BJ (cell line): ENCODE measurements at regions of chr1 and their contacts with region 1.

Region 1: GRCh38 chr1:115239148-115239820 is 98.8 kb downstream of the NGF start:
- DNase-seq: peak; percentile 71
- H3K4me3 ChIP-seq: no peak overlapping the region
- H3K27me3 ChIP-seq: no peaks in the 10 kb centered on the region
- CTCF ChIP-seq: no peak

Region 2: GRCh38 chr1:114575532-114575931 is 663.8 kb before region 1 on chr1:
- CTCF ChIA-PET with region 1: no interaction called
- POLR2A ChIA-PET with region 1: no interaction called
- DNase-seq: no peak
- H3K4me3 ChIP-seq: no peak overlapping the region
- H3K27me3 ChIP-seq: no peaks in the 10 kb centered on the region
- CTCF ChIP-seq: no peak

Region 3: DNA sequence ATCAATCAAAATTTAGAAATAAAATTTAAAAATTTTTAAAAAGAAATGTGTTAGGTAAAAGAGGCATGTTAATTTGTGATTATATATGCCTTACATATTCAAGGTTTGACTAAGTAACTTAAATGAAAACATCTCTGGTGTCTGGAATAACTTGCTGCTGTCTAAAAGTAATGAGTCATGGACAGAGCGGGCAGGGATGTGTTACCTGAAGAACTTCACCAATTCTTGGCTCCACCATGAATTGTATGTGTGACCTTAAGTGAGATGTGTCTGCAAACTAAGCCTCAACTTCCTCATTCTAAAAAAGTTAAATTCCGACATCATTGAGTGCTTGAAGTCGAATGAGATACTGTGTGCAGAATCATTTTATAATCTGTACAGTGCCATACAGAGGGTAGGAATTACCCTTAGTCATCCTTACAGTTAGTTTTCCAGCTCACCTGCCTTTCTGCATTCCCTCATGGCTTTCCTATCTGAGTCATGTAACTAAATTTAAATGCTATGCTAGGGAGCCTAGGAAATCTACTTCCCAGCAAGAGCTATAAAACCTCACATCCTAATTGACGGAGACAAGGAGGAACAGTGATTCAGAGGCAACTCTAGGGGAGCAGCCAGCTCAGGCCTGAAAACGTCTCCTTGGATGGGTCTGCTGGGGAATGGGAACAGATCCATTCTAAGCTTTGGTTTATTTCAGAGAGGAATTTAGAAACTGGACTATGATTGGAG is 49.3 kb before region 1 on chr1:
- CTCF ChIA-PET with region 1: interaction called, 3 read pairs
- POLR2A ChIA-PET with region 1: interaction called, 11 read pairs
- DNase-seq: peak; percentile 95
- H3K4me3 ChIP-seq: no peak overlapping the region
- H3K27me3 ChIP-seq: no peaks in the 10 kb centered on the region
- CTCF ChIP-seq: no peak

Region 4: GRCh38 chr1:115266729-115267421 is 27.6 kb after region 1 on chr1:
- CTCF ChIA-PET with region 1: no interaction called
- POLR2A ChIA-PET with region 1: no interaction called
- DNase-seq: no peak
- H3K4me3 ChIP-seq: no peak overlapping the region
- H3K27me3 ChIP-seq: no peaks in the 10 kb centered on the region
- CTCF ChIP-seq: no peak